CD8-positive, alpha-beta T cell (primary cell): ENCODE measurements at regions of chr9 and their contacts with region 1.

Region 1: GRCh38 chr9:123414946-123415821 is 59.2 kb downstream of the CRB2 start:
- DNase-seq: no peak
- ATAC-seq: no peak
- H3K4me3 ChIP-seq: no peak overlapping the region
- H3K4me3 Mint-ChIP-seq: no peak overlapping the region
- H3K27ac ChIP-seq: no peak overlapping the region
- H3K27ac Mint-ChIP-seq: no peak overlapping the region
- H3K4me1 ChIP-seq: no peaks in the 10 kb centered on the region
- H3K4me1 Mint-ChIP-seq: no peaks in the 10 kb centered on the region
- H3K27me3 ChIP-seq: no peaks in the 10 kb centered on the region
- H3K27me3 Mint-ChIP-seq: no peaks in the 10 kb centered on the region
- CTCF ChIP-seq: no peak

Region 2: DNA sequence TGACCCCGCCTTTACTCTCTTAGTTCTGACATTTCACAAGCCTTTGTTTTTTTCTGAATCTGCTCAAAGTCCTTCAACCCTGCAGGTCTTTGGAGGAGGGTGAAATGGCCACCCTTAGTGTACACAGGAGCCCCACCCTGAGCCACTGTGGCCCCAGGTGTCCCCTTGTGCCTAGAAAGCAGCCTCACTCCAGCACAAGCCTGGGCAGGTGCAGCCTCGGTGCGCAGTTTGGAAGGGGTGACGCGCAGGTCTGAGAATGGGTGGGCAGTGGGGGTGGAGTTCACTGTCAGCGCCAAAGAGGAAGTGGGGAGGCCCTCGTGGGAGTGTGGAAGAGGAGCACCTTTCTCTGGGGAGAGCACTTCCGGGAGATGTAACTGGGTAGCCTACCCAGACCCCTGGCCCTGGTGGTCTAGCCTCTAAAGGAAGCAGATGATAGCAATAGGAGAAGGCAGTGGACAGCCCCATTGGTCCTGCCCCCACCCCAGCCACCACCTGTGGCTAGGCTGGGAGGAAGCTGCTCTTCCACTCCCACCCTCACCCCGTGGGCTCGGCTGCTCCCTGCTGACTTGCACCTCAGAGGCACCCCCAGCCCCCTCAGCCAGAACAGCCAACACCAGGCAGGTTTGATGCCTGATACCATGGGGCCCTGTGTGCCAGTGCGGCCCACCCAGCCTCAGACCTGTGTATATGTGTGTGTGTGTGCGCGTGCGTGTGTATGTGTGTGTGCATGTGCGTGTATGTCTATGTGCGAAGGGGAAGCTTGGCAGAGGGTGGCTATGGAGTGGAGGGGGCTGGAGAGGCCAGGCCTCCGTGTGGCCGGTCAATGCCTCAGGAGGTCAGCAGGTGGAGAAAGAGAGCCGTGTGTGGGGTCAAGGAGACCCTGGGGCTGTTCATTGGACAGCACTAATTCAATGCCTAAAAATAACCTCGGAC is 1780.6 kb before region 1 on chr9:
- CTCF ChIA-PET with region 1: no interaction called
- POLR2A ChIA-PET with region 1: no interaction called
- intact Hi-C with region 1: loop called in 1 of 2 experiments (anchors 10 kb)
- DNase-seq: no peak
- ATAC-seq: no peak
- H3K4me3 ChIP-seq: no peak overlapping the region
- H3K4me3 Mint-ChIP-seq: no peak overlapping the region
- H3K27ac ChIP-seq: no peak overlapping the region
- H3K27ac Mint-ChIP-seq: no peak overlapping the region
- H3K4me1 ChIP-seq: no peaks in the 10 kb centered on the region
- H3K4me1 Mint-ChIP-seq: peaks cover 11% of the 10 kb centered on the region
- H3K27me3 ChIP-seq: peaks cover 0 to 3% of the 10 kb centered on the region in 2 experiments
- H3K27me3 Mint-ChIP-seq: peaks cover 5% of the 10 kb centered on the region
- CTCF ChIP-seq: no peak

Region 3: GRCh38 chr9:123441769-123442168 is 26.6 kb after region 1 on chr9:
- CTCF ChIA-PET with region 1: no interaction called
- POLR2A ChIA-PET with region 1: no interaction called
- intact Hi-C with region 1: no loop called
- DNase-seq: no peak
- ATAC-seq: no peak
- H3K4me3 ChIP-seq: no peak overlapping the region
- H3K4me3 Mint-ChIP-seq: no peak overlapping the region
- H3K27ac ChIP-seq: no peak overlapping the region
- H3K27ac Mint-ChIP-seq: no peak overlapping the region
- H3K4me1 ChIP-seq: no peaks in the 10 kb centered on the region
- H3K4me1 Mint-ChIP-seq: no peaks in the 10 kb centered on the region
- H3K27me3 ChIP-seq: no peaks in the 10 kb centered on the region
- H3K27me3 Mint-ChIP-seq: no peaks in the 10 kb centered on the region
- CTCF ChIP-seq: no peak

Region 4: GRCh38 chr9:123544007-123544827 is 129.0 kb after region 1 on chr9:
- CTCF ChIA-PET with region 1: no interaction called
- POLR2A ChIA-PET with region 1: no interaction called
- intact Hi-C with region 1: no loop called
- DNase-seq: peak in 2 of 9 experiments; percentile 29 to 45
- ATAC-seq: no peak
- H3K4me3 ChIP-seq: no peak overlapping the region
- H3K4me3 Mint-ChIP-seq: no peak overlapping the region
- H3K27ac ChIP-seq: no peak overlapping the region
- H3K27ac Mint-ChIP-seq: no peak overlapping the region
- H3K4me1 ChIP-seq: no peaks in the 10 kb centered on the region
- H3K4me1 Mint-ChIP-seq: no peaks in the 10 kb centered on the region
- H3K27me3 ChIP-seq: no peaks in the 10 kb centered on the region
- H3K27me3 Mint-ChIP-seq: no peaks in the 10 kb centered on the region
- CTCF ChIP-seq: peak; percentile 77